ENCODE measurements at regions of chr1 and their contacts with region 1.

Region 1: DNA sequence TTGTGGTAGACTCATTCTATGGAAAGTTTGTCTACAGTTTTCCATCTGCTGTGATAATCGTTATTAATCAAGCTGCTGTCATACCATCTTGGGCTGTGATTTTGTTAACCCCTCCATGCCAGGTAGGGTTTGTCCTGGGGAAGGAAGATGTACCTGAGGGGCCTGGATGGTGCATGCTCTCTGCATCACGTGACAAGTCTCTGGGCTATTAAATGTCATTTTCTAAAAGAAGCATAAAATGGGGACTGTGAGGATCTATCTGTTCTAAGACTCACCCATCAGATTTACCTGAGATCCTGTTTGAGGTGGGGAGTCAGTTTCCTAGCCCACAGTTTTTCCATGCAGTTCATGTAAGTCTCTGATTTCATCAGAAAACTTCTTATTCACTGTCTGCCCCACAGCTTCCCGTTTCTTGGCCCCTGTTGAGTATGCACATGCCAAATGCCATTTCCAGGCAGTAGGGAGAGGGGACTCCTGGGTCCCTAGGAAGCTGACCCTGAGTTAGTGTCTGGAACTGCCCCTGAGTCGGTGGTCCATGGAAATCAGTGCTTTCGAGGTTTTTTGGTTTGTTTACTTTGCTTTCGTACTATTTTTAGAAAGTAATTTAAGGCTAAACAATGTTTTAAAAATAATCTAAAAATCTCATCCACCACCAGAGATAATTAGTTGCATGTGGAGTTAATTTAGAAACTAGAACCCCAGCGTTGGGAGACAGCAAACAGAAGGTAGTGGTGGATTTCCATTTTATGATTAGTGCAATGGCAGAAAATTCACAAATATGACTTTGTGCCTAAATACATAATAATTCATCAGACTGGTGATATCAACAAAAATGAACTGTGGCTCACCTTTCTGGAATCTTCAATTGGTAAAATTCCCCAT is 46.7 kb downstream of the ZBTB18 start:
- DNase-seq: no peak
- ATAC-seq: no peak
- H3K4me3 ChIP-seq: no peak overlapping the region
- H3K27ac ChIP-seq: no peak overlapping the region
- H3K4me1 ChIP-seq: no peaks in the 10 kb centered on the region
- H3K27me3 ChIP-seq: no peaks in the 10 kb centered on the region
- CTCF ChIP-seq: no peak

Region 2: DNA sequence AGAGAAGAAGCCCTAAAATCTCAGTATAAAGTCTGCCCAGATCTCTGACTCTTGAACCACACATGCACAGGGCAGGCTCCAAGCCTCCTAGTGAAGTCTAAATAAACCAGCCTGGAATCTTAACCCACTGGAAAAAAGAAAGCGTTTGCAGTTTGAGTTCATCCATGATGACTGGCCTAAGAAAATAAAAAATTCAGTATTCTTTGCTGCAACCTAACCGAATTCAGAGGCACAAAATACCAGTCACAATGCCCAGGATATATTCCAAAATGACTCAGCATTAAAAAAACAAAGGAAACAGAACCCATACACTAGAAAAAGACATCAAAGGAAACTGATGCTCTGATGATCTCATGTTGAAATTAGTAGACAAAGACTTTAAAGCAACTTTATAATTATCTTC is 572.7 kb before region 1 on chr1:
- CTCF ChIA-PET with region 1: no interaction called
- POLR2A ChIA-PET with region 1: interaction called, 12 read pairs
- intact Hi-C with region 1: no loop called
- DNase-seq: peak; percentile 88
- ATAC-seq: peak; percentile 89
- H3K4me3 ChIP-seq: no peak overlapping the region
- H3K27ac ChIP-seq: peak overlapping the region; percentile 60
- H3K4me1 ChIP-seq: peaks cover 11% of the 10 kb centered on the region
- H3K27me3 ChIP-seq: no peaks in the 10 kb centered on the region
- CTCF ChIP-seq: no peak

Region 3: DNA sequence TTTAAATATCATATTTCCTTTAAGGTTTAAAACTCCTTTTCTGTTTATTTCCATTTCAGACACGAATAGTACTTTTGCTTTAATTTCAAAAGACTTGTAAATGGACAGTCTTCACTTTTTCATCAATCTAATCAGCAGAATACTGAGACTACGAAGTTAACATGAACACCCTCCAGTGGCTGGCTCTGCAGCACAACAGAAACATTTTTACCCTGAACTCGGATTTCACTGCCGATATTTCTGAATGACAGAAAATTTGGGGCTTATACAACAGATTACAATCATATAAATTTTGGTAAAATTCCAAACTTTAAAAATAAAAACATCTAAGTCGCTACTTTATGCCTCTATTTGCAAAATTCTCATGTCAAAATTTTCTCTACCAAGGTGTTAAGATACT is 334.0 kb before region 1 on chr1:
- CTCF ChIA-PET with region 1: no interaction called
- POLR2A ChIA-PET with region 1: no interaction called
- intact Hi-C with region 1: no loop called
- DNase-seq: no peak
- ATAC-seq: no peak
- H3K4me3 ChIP-seq: no peak overlapping the region
- H3K27ac ChIP-seq: no peak overlapping the region
- H3K4me1 ChIP-seq: no peaks in the 10 kb centered on the region
- H3K27me3 ChIP-seq: no peaks in the 10 kb centered on the region
- CTCF ChIP-seq: no peak

Region 4: GRCh38 chr1:243827206-243827605 is 270.6 kb before region 1 on chr1:
- CTCF ChIA-PET with region 1: no interaction called
- POLR2A ChIA-PET with region 1: no interaction called
- intact Hi-C with region 1: no loop called
- DNase-seq: no peak
- ATAC-seq: no peak
- H3K4me3 ChIP-seq: no peak overlapping the region
- H3K27ac ChIP-seq: no peak overlapping the region
- H3K4me1 ChIP-seq: no peaks in the 10 kb centered on the region
- H3K27me3 ChIP-seq: no peaks in the 10 kb centered on the region
- CTCF ChIP-seq: no peak

Measured in PC-3 (cell line).